Mammary epithelial cell (primary cell): ENCODE measurements at regions of chr4 and their contacts with region 1.

Region 1: GRCh38 chr4:98995183-98996055 is at the start of gene METAP1:
- DNase-seq: peak; percentile 97
- H3K4me3 ChIP-seq: peak within 1 kb of the TSS; percentile 94 to 98 (median 97)
- H3K27ac ChIP-seq: peak within 1 kb of the TSS; percentile 81
- H3K4me1 ChIP-seq: peaks cover 27% of the 10 kb centered on the region
- H3K27me3 ChIP-seq: no peaks in the 10 kb centered on the region
- CTCF ChIP-seq: peak; percentile 34 to 79
- total RNA-seq, gene METAP1: 67.7 to 72.7 TPM

Region 2: DNA sequence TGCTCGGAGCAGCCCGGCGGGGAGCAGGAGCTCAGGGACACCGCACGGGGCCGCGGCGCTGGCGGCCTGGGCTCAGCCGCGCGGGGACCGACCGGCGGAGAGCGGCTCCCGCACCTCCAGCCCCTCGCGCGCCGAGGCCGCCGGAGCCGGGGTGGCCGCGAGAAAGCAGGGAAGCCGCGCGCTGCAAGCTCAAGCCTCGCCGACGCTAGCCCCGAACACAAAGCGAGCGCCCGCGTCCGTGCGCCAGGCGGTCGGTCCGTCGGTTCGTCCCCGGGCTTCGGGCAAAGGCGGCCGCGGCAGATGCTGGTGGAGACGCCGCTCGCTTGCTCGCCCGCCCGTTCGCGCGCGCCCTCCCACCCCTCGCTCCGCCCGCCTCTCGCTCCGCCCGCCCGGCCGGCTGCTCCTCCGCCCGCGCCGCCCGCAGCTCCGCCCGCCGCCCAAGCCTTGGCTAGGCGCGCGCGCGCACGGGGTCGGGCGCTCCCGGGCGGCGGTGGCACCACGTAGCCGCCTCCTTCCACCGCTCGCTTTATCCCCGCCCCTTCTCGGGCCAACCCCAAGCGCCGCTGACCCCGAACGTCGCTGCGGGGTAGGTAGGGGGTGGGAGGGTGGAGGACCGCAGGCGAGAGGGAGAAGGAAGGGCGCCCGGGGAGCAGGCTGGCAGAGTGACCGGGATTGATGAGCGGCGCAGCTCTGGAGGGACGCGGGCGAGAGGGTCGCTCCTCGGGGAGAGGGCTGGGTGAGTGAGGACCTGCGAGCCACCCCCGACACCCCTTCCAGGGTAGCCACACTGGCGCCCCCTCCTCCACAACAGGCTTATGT is 336.9 kb before region 1 on chr4 and contains the start of gene TSPAN5:
- CTCF ChIA-PET with region 1: interaction called, 4 read pairs
- dilution Hi-C with region 1: no loop called
- in situ Hi-C with region 1: no loop called
- intact Hi-C with region 1: loop called (anchors 5 kb)
- DNase-seq: peak; percentile 80
- H3K4me3 ChIP-seq: peak within 1 kb of the TSS; percentile 65 to 89 (median 83)
- H3K27ac ChIP-seq: peak within 1 kb of the TSS; percentile 57
- H3K4me1 ChIP-seq: peaks cover 57% of the 10 kb centered on the region
- H3K27me3 ChIP-seq: no peaks in the 10 kb centered on the region
- CTCF ChIP-seq: no peak
- total RNA-seq, gene TSPAN5: 19.0 to 38.4 TPM

Region 3: GRCh38 chr4:98890702-98891455 is 104.5 kb before region 1 on chr4:
- CTCF ChIA-PET with region 1: interaction called, 10 read pairs
- dilution Hi-C with region 1: no loop called
- in situ Hi-C with region 1: no loop called
- intact Hi-C with region 1: no loop called
- DNase-seq: peak; percentile 76
- H3K4me3 ChIP-seq: no peak overlapping the region
- H3K27ac ChIP-seq: peak overlapping the region; percentile 12
- H3K4me1 ChIP-seq: peaks cover 12% of the 10 kb centered on the region
- H3K27me3 ChIP-seq: no peaks in the 10 kb centered on the region
- CTCF ChIP-seq: no peak

Region 4: DNA sequence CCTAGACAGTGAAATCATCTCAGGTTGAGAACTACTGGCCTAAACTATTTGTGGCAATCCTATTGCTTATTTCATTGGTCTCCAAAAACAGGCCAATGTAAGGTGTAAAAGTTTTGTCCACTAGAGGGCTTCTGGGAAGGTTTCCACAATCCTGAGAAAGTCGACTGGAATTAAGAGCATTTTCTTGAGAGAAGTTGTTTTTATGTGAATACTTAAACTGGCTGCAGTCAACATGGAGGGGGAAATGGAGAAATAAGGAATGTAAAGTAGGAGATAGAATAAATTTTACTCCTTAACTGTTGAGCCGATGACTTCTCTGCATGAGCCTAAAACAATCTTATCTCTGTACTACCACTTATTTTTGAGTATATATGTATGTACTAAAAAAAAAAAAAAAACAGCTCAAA is 55.5 kb before region 1 on chr4:
- CTCF ChIA-PET with region 1: no interaction called
- dilution Hi-C with region 1: no loop called
- in situ Hi-C with region 1: no loop called
- intact Hi-C with region 1: loop called (anchors 1 kb)
- DNase-seq: peak; percentile 49
- H3K4me3 ChIP-seq: no peak overlapping the region
- H3K27ac ChIP-seq: no peak overlapping the region
- H3K4me1 ChIP-seq: peaks cover 9% of the 10 kb centered on the region
- H3K27me3 ChIP-seq: no peaks in the 10 kb centered on the region
- CTCF ChIP-seq: peak; percentile 81 to 84

Region 5: DNA sequence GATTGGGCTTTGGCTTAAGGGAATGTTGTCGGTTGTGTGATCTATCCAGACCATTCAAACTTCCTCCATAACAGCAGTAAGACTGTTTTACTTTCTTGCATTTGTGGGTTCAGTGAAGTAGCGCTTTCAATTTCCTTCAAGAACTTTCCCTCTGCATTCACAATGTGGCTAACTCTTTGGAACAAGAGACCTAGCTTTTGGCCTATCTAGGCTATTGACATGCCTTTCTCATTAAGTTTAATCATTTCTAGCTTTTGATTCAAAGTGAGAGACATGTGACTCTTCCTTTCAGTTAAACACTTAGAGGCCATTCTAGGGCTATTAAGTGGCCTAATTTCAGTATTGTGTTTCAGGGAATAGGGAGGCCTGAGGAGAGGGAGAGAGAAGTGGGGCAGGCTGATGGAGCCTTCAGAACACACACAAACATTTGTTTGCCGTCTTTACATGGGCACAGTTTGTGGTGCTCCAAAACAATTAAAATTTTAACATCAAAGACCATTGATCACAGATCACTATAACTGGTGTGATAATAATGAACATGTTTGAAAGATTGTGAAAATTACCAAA is 59.1 kb after region 1 on chr4:
- CTCF ChIA-PET with region 1: interaction called, 27 read pairs
- dilution Hi-C with region 1: no loop called
- in situ Hi-C with region 1: loop called in 1 of 2 experiments (anchors 5 kb)
- intact Hi-C with region 1: loop called (anchors 1 kb)
- DNase-seq: no peak
- H3K4me3 ChIP-seq: no peak overlapping the region
- H3K27ac ChIP-seq: no peak overlapping the region
- H3K4me1 ChIP-seq: peaks cover 13% of the 10 kb centered on the region
- H3K27me3 ChIP-seq: no peaks in the 10 kb centered on the region
- CTCF ChIP-seq: no peak